GM12878 (cell line): ENCODE measurements at regions of chr17 and their contacts with region 1.

Region 1: GRCh38 chr17:36148559-36149295 is 27.7 kb downstream of the TBC1D3B start:
- DNase-seq: peak; percentile 57
- ATAC-seq: peak; percentile 97
- H3K4me3 ChIP-seq: no peak overlapping the region
- H3K27ac ChIP-seq: no peak overlapping the region
- H3K4me1 ChIP-seq: peaks cover 8% of the 10 kb centered on the region
- H3K27me3 ChIP-seq: no peaks in the 10 kb centered on the region
- CTCF ChIP-seq: peak; percentile 99; a peak in 5 of 6 replicates
- EP300 ChIP-seq: no peak
- POLR2A ChIP-seq: no peak
- RAD21 ChIP-seq: peak; percentile 100

Region 2: DNA sequence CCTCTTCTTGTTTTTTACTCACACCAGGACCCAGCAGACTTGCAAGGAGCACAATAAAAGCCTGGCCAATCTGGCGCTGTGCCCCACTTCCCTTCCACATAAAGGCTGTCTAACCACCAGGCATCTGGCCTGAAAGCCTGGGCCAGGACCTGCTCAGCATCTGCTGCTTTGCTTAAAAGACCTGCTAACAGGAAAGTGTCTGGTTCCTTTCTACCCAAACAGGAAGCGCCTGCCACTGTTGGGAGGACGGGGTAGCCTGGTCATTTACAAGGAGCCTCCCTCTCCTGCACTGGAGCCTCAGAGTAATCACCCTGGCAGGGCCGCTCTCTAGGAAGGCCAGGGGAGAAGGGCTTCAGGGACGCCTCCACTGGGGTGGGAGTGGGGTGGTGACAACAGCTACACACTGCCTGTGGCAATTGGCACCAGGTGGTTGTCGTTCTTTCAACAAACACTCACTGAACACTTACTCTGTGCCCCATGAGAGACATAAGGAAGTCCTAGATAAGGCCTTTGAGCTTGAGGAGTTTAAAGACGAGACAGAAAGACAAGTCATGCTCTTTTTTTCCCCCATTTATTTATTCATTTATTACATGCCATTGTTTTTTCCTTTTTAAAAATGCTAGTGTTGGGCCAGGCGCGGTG is 347.0 kb before region 1 on chr17:
- CTCF ChIA-PET with region 1: no interaction called
- POLR2A ChIA-PET with region 1: no interaction called
- RAD21 ChIA-PET with region 1: no interaction called
- SMC1A ChIA-PET with region 1: no interaction called
- in situ Hi-C with region 1: no loop called
- intact Hi-C with region 1: no loop called
- DNase-seq: no peak
- ATAC-seq: no peak
- H3K4me3 ChIP-seq: no peak overlapping the region
- H3K27ac ChIP-seq: no peak overlapping the region
- H3K4me1 ChIP-seq: no peaks in the 10 kb centered on the region; the same call in 1 of the 2 replicates
- H3K27me3 ChIP-seq: peaks cover 0 to 4% of the 10 kb centered on the region in 2 experiments; a peak in 3 of 4 replicates
- CTCF ChIP-seq: no peak
- EP300 ChIP-seq: no peak
- POLR2A ChIP-seq: no peak
- RAD21 ChIP-seq: no peak

Region 3: DNA sequence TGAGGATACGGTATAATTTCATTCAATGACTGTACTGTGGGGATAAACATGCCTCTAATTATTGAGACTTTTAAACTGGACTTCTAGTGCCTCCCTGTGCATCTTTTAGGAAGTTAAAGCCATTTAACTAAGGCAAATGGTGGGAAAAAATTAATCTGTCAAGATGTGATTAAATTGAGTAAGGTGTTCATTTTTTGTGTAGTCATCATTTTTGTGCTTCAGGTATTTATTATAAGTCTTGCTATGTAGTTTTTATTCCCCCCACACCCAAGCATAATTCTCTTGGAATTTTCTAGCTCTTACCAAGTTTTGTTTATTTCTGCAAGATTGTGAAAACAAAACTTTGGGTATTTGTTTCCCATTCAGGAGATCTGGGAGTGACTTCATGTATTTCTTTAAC is 329.3 kb before region 1 on chr17:
- CTCF ChIA-PET with region 1: no interaction called
- POLR2A ChIA-PET with region 1: no interaction called
- RAD21 ChIA-PET with region 1: no interaction called
- SMC1A ChIA-PET with region 1: no interaction called
- in situ Hi-C with region 1: no loop called
- intact Hi-C with region 1: no loop called
- DNase-seq: no peak
- ATAC-seq: no peak
- H3K4me3 ChIP-seq: no peak overlapping the region
- H3K27ac ChIP-seq: no peak overlapping the region
- H3K4me1 ChIP-seq: no peaks in the 10 kb centered on the region
- H3K27me3 ChIP-seq: no peaks in the 10 kb centered on the region
- CTCF ChIP-seq: no peak
- EP300 ChIP-seq: no peak
- POLR2A ChIP-seq: no peak
- RAD21 ChIP-seq: no peak

Region 4: GRCh38 chr17:35947156-35947585 is 201.6 kb before region 1 on chr17:
- CTCF ChIA-PET with region 1: interaction called, 18 read pairs
- POLR2A ChIA-PET with region 1: no interaction called
- RAD21 ChIA-PET with region 1: interaction called, 7 read pairs
- SMC1A ChIA-PET with region 1: interaction called, 6 read pairs
- in situ Hi-C with region 1: no loop called
- intact Hi-C with region 1: no loop called
- DNase-seq: no peak
- ATAC-seq: peak; percentile 98
- H3K4me3 ChIP-seq: no peak overlapping the region
- H3K27ac ChIP-seq: no peak overlapping the region
- H3K4me1 ChIP-seq: no peaks in the 10 kb centered on the region
- H3K27me3 ChIP-seq: no peaks in the 10 kb centered on the region; a peak in 1 of 4 replicates
- CTCF ChIP-seq: peak; percentile 84 to 97 (median 96)
- EP300 ChIP-seq: no peak
- POLR2A ChIP-seq: no peak
- RAD21 ChIP-seq: peak; percentile 89

Region 5: GRCh38 chr17:36008998-36009665 is 139.6 kb before region 1 on chr17:
- CTCF ChIA-PET with region 1: interaction called, 17 read pairs
- POLR2A ChIA-PET with region 1: no interaction called
- RAD21 ChIA-PET with region 1: interaction called, 6 read pairs
- SMC1A ChIA-PET with region 1: interaction called, 11 read pairs
- in situ Hi-C with region 1: no loop called
- intact Hi-C with region 1: no loop called
- DNase-seq: no peak
- ATAC-seq: peak; percentile 77
- H3K4me3 ChIP-seq: no peak overlapping the region; the same call in 1 of the 2 replicates
- H3K27ac ChIP-seq: no peak overlapping the region
- H3K4me1 ChIP-seq: no peaks in the 10 kb centered on the region
- H3K27me3 ChIP-seq: no peaks in the 10 kb centered on the region
- CTCF ChIP-seq: peak; percentile 4 to 51 (median 47); a peak in 4 of 6 replicates
- EP300 ChIP-seq: no peak
- POLR2A ChIP-seq: no peak
- RAD21 ChIP-seq: no peak

Region 6: GRCh38 chr17:36089888-36090836 is 58.6 kb before region 1 on chr17 and contains the start of gene CCL3:
- CTCF ChIA-PET with region 1: interaction called, 52 read pairs
- POLR2A ChIA-PET with region 1: interaction called, 5 read pairs
- RAD21 ChIA-PET with region 1: interaction called, 83 read pairs
- SMC1A ChIA-PET with region 1: interaction called, 66 read pairs
- in situ Hi-C with region 1: no loop called
- intact Hi-C with region 1: loop called (anchors 2 kb)
- DNase-seq: peak; percentile 99
- ATAC-seq: peak; percentile 70
- H3K4me3 ChIP-seq: peak within 1 kb of the TSS; percentile 64
- H3K27ac ChIP-seq: peak within 1 kb of the TSS; percentile 87
- H3K4me1 ChIP-seq: peaks cover 50% of the 10 kb centered on the region
- H3K27me3 ChIP-seq: no peaks in the 10 kb centered on the region
- CTCF ChIP-seq: no peak
- EP300 ChIP-seq: peak; percentile 91 to 96
- POLR2A ChIP-seq: peak; percentile 92
- RAD21 ChIP-seq: no peak
- polyA plus RNA-seq, gene CCL3: 240 to 318 TPM

Region 7: GRCh38 chr17:36127199-36127893 is 21.4 kb before region 1 on chr17:
- CTCF ChIA-PET with region 1: interaction called, 28 read pairs
- POLR2A ChIA-PET with region 1: interaction called, 14 read pairs
- RAD21 ChIA-PET with region 1: interaction called, 23 read pairs
- SMC1A ChIA-PET with region 1: interaction called, 118 read pairs
- in situ Hi-C with region 1: no loop called
- intact Hi-C with region 1: no loop called
- DNase-seq: peak; percentile 71
- ATAC-seq: peak; percentile 81
- H3K4me3 ChIP-seq: no peak overlapping the region
- H3K27ac ChIP-seq: peak overlapping the region; percentile 45
- H3K4me1 ChIP-seq: peaks cover 24% of the 10 kb centered on the region
- H3K27me3 ChIP-seq: no peaks in the 10 kb centered on the region
- CTCF ChIP-seq: no peak
- EP300 ChIP-seq: peak in 1 of 2 experiments; percentile 36; a peak in 1 of 4 replicates
- POLR2A ChIP-seq: 0 out of 2 replicates have a peak, but pooled peaks have one; percentile 16
- RAD21 ChIP-seq: no peak

Region 8: DNA sequence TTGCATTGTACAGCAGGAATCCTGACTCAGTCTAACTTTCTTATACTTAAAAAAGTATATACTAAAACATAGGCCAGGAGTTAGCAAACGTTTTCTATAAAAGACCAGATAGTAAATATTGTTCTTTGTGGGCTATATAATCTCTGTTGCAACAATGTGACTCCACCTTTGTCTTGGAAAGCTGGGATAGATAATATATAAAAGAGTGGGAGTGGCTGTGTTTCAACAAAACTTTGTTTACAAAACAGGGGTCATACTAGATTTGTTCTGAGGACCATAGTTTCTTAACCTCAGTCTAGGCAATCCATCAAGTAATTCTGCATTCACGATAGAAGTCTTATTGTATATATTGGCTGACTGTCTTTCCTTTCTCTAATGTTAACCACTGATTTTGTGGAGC is 36.7 kb after region 1 on chr17:
- CTCF ChIA-PET with region 1: no interaction called
- POLR2A ChIA-PET with region 1: no interaction called
- RAD21 ChIA-PET with region 1: no interaction called
- SMC1A ChIA-PET with region 1: no interaction called
- in situ Hi-C with region 1: no loop called
- intact Hi-C with region 1: no loop called
- DNase-seq: no peak
- ATAC-seq: no peak
- H3K4me3 ChIP-seq: no peak overlapping the region
- H3K27ac ChIP-seq: no peak overlapping the region
- H3K4me1 ChIP-seq: peaks cover 6% of the 10 kb centered on the region; the same call in 1 of the 2 replicates
- H3K27me3 ChIP-seq: no peaks in the 10 kb centered on the region
- CTCF ChIP-seq: no peak
- EP300 ChIP-seq: no peak
- POLR2A ChIP-seq: no peak
- RAD21 ChIP-seq: no peak